A549 (cell line): ENCODE measurements at regions of chr12 and their contacts with region 1.

Region 1: GRCh38 chr12:52147367-52147972 is 44.3 kb downstream of the KRT80 start:
- DNase-seq: peak; percentile 96 to 100
- ATAC-seq: peak; percentile 46 to 71
- H3K4me3 ChIP-seq: no peak overlapping the region
- H3K27ac ChIP-seq: peak overlapping the region; percentile 100
- H3K4me1 ChIP-seq: peaks cover 93% of the 10 kb centered on the region
- CTCF ChIP-seq: no peak
- EP300 ChIP-seq: peak; percentile 97 to 99
- POLR2A ChIP-seq: no peak
- RAD21 ChIP-seq: peak in 1 of 2 experiments; percentile 42; a peak in 3 of 5 replicates

Region 2: GRCh38 chr12:52192173-52192791 is 44.8 kb after region 1 on chr12:
- CTCF ChIA-PET with region 1: interaction called, 5 read pairs
- POLR2A ChIA-PET with region 1: interaction called, 12 read pairs
- DNase-seq: peak; percentile 99
- ATAC-seq: peak; percentile 91 to 92
- H3K4me3 ChIP-seq: peak overlapping the region; percentile 64
- H3K27ac ChIP-seq: peak overlapping the region; percentile 96 to 100
- H3K4me1 ChIP-seq: peaks cover 76% of the 10 kb centered on the region
- CTCF ChIP-seq: no peak
- EP300 ChIP-seq: peak; percentile 80 to 86; a peak in 4 of 5 replicates
- POLR2A ChIP-seq: no peak
- RAD21 ChIP-seq: peak in 1 of 2 experiments; percentile 27; a peak in 2 of 5 replicates

Region 3: GRCh38 chr12:52230327-52231291 is 83.1 kb after region 1 on chr12:
- CTCF ChIA-PET with region 1: interaction called, 8 read pairs
- POLR2A ChIA-PET with region 1: interaction called, 13 read pairs
- DNase-seq: peak in 1 of 2 experiments; percentile 76
- ATAC-seq: peak; percentile 30 to 55; a peak in 3 of 6 replicates
- H3K4me3 ChIP-seq: no peak overlapping the region
- H3K27ac ChIP-seq: peak overlapping the region; percentile 97
- H3K4me1 ChIP-seq: peaks cover 48% of the 10 kb centered on the region
- CTCF ChIP-seq: no peak
- EP300 ChIP-seq: peak; percentile 67 to 71; a peak in 2 of 5 replicates
- POLR2A ChIP-seq: no peak
- RAD21 ChIP-seq: 0 out of 5 replicates have a peak, but pooled peaks of 1 of the 2 experiments have one; percentile 14

Region 4: DNA sequence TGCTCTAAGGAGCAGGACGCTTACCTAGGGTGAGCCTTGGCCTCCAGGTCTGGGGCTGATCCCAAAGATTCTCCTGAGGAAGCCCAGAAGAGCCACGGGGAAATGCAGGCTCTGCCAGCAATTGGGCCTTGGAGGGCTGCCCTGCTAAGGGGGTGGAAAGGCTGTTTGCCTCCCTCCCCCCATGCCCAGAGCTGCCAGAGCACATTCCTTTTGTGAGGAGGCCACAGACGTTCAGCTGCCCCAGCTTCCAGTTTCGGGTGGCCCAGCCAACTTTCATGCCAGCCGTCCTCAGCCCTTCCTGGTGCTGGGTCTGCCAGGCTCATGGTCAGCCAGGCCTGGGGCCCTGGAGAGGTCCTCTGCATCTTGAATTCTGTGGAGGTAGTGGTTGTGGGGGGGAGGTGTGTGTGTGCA is 101.6 kb after region 1 on chr12:
- CTCF ChIA-PET with region 1: interaction called, 25 read pairs
- POLR2A ChIA-PET with region 1: interaction called, 29 read pairs
- DNase-seq: peak in 1 of 2 experiments; percentile 71
- ATAC-seq: peak; percentile 0; a peak in 2 of 6 replicates
- H3K4me3 ChIP-seq: no peak overlapping the region
- H3K27ac ChIP-seq: peak overlapping the region; percentile 92 to 97
- H3K4me1 ChIP-seq: peaks cover 96% of the 10 kb centered on the region
- CTCF ChIP-seq: no peak
- EP300 ChIP-seq: no peak
- POLR2A ChIP-seq: no peak; the same call in 1 of the 2 replicates
- RAD21 ChIP-seq: 0 out of 5 replicates have a peak, but pooled peaks of 1 of the 2 experiments have one; percentile 2

Region 5: DNA sequence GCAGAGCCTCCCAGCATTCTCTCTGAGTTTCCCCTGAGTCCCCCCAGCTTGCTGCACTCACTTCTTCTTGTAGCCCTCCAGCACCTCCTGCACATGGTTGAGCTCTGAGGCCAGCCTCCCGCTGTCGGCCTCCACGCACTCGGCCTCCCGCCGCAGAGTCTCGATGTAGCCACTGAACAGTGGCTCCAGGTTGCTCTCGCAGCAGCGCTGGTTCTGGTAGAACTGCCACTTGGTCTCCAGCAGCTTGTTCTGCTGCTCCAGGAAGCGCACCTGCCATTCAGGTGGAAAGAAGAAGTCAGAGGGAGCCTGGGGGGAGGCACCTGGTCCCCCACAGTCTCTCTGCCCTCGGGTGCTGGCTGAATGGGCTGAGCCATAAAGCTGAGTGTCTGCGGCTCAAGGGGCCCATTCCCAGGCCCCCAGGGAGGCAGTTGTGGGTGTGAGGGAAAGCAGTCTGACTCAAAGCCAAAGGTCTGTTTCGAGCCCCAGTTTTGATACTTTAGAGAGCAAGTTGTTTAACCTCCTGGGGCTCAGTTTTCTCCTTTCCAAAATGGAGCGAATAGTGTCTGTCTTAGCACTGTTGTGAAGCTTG is 217.5 kb after region 1 on chr12:
- CTCF ChIA-PET with region 1: interaction called, 6 read pairs
- POLR2A ChIA-PET with region 1: interaction called, 11 read pairs
- DNase-seq: no peak
- ATAC-seq: no peak
- H3K4me3 ChIP-seq: no peak overlapping the region
- H3K27ac ChIP-seq: peak overlapping the region in 1 of 2 experiments; percentile 56; a peak in 3 of 6 replicates
- H3K4me1 ChIP-seq: peaks cover 10% of the 10 kb centered on the region; the same call in 1 of the 3 replicates
- CTCF ChIP-seq: no peak
- EP300 ChIP-seq: no peak
- POLR2A ChIP-seq: no peak
- RAD21 ChIP-seq: no peak

Region 6: GRCh38 chr12:52865090-52865944 is 717.8 kb after region 1 on chr12:
- CTCF ChIA-PET with region 1: interaction called, 833 read pairs
- POLR2A ChIA-PET with region 1: interaction called, 3 read pairs
- DNase-seq: peak; percentile 92 to 94
- ATAC-seq: peak; percentile 79 to 86
- H3K4me3 ChIP-seq: no peak overlapping the region
- H3K27ac ChIP-seq: peak overlapping the region; percentile 61 to 73
- H3K4me1 ChIP-seq: peaks cover 41% of the 10 kb centered on the region
- CTCF ChIP-seq: peak; percentile 77
- EP300 ChIP-seq: no peak
- POLR2A ChIP-seq: no peak
- RAD21 ChIP-seq: peak; percentile 91 to 96

Region 7: GRCh38 chr12:52903285-52903854 is 755.9 kb after region 1 on chr12:
- CTCF ChIA-PET with region 1: interaction called, 3 read pairs
- POLR2A ChIA-PET with region 1: interaction called, 10 read pairs
- DNase-seq: peak; percentile 50 to 69
- ATAC-seq: peak; percentile 26 to 39; a peak in 5 of 6 replicates
- H3K4me3 ChIP-seq: peak overlapping the region; percentile 87
- H3K27ac ChIP-seq: peak overlapping the region; percentile 91 to 99
- H3K4me1 ChIP-seq: peaks cover 72% of the 10 kb centered on the region
- CTCF ChIP-seq: no peak
- EP300 ChIP-seq: no peak
- POLR2A ChIP-seq: peak; percentile 9; the same call in 1 of the 2 replicates
- RAD21 ChIP-seq: 0 out of 5 replicates have a peak, but pooled peaks of 1 of the 2 experiments have one; percentile 2